ENCODE measurements at regions of chr3 and their contacts with region 1.

Region 1: GRCh38 chr3:189967254-189967865 is 153.3 kb downstream of the P3H2 start:
- DNase-seq: no peak
- ATAC-seq: peak; percentile 64
- H3K4me3 ChIP-seq: no peak overlapping the region
- H3K27ac ChIP-seq: no peak overlapping the region
- H3K4me1 ChIP-seq: no peaks in the 10 kb centered on the region
- H3K27me3 ChIP-seq: no peaks in the 10 kb centered on the region

Region 2: DNA sequence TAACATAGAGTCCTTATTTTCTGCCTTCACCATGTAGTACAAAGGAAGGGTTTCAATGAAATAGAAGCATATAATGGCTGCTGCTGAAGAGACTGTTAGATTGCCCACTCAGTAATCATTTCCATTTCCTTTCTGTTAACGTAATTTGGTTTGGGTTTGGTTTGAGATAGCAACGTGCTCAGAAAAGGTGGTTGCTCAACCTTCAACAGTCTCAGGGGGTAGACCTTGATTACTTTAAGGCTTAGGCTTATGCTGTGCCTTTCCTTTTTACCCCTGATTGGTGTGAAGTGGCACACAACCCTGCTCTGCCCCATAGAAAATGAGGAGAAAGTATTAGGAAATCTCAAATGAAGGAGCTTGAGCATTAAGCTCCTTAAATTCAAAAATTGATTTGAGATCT is 499.9 kb before region 1 on chr3:
- intact Hi-C with region 1: no loop called
- DNase-seq: no peak
- ATAC-seq: no peak
- H3K4me3 ChIP-seq: no peak overlapping the region
- H3K27ac ChIP-seq: no peak overlapping the region
- H3K4me1 ChIP-seq: no peaks in the 10 kb centered on the region
- H3K27me3 ChIP-seq: no peaks in the 10 kb centered on the region

Region 3: DNA sequence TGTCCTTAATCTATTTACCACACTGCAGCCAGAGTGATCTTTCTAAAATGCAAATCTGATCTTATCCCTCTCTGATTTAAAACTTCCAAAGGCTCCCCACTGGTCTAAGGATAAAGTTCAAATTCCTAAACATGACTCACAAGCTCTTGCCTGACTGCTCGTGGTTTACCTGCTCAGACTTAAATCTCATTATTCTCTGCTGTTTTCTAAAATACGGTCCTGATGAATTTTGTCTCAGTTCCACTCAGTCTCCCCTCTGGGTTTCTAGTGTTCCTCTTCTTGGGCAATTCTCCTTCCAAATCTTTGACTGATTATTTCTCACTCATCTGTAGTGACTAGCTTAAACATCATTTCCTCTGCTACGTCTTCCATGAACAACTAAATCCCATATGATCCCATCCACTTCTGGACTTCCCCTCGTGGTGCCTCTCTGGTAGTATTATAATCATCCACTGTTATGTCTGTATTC is 45.0 kb after region 1 on chr3:
- intact Hi-C with region 1: loop called in 1 of 2 experiments (anchors 5 kb)
- DNase-seq: no peak
- ATAC-seq: no peak
- H3K4me3 ChIP-seq: no peak overlapping the region
- H3K27ac ChIP-seq: no peak overlapping the region
- H3K4me1 ChIP-seq: peaks cover 0 to 2% of the 10 kb centered on the region in 2 donors
- H3K27me3 ChIP-seq: no peaks in the 10 kb centered on the region

Region 4: GRCh38 chr3:190038050-190038933 is 70.9 kb after region 1 on chr3:
- intact Hi-C with region 1: no loop called
- DNase-seq: peak in 1 of 2 donors; percentile 55
- ATAC-seq: no peak
- H3K4me3 ChIP-seq: no peak overlapping the region
- H3K27ac ChIP-seq: no peak overlapping the region
- H3K4me1 ChIP-seq: no peaks in the 10 kb centered on the region
- H3K27me3 ChIP-seq: no peaks in the 10 kb centered on the region

Region 5: GRCh38 chr3:190120269-190121060 is 153.1 kb after region 1 on chr3 and contains the start of gene P3H2:
- intact Hi-C with region 1: loop called (anchors 5 kb)
- DNase-seq: peak; percentile 92 to 93
- ATAC-seq: peak; percentile 95
- H3K4me3 ChIP-seq: peak within 1 kb of the TSS; percentile 75 to 88
- H3K27ac ChIP-seq: peak within 1 kb of the TSS in 1 of 2 donors; percentile 73
- H3K4me1 ChIP-seq: peaks cover 0 to 9% of the 10 kb centered on the region in 2 donors
- H3K27me3 ChIP-seq: no peaks in the 10 kb centered on the region
- total RNA-seq, gene P3H2: 23.9 to 25.8 TPM

Region 6: GRCh38 chr3:190205739-190206138 is 238.4 kb after region 1 on chr3:
- intact Hi-C with region 1: loop called in 1 of 2 experiments (anchors 2 kb)
- DNase-seq: no peak
- ATAC-seq: no peak
- H3K4me3 ChIP-seq: no peak overlapping the region
- H3K27ac ChIP-seq: no peak overlapping the region
- H3K4me1 ChIP-seq: no peaks in the 10 kb centered on the region
- H3K27me3 ChIP-seq: no peaks in the 10 kb centered on the region